Activated CD4-positive, alpha-beta T cell treated with anti-CD3 and anti-CD28 coated beads, Interleukin-2, amount 10 ng/mL, durations not matched to agents 24 days and 14 days (primary cell): ENCODE measurements at regions of chr14 and their contacts with region 1.

Region 1: DNA sequence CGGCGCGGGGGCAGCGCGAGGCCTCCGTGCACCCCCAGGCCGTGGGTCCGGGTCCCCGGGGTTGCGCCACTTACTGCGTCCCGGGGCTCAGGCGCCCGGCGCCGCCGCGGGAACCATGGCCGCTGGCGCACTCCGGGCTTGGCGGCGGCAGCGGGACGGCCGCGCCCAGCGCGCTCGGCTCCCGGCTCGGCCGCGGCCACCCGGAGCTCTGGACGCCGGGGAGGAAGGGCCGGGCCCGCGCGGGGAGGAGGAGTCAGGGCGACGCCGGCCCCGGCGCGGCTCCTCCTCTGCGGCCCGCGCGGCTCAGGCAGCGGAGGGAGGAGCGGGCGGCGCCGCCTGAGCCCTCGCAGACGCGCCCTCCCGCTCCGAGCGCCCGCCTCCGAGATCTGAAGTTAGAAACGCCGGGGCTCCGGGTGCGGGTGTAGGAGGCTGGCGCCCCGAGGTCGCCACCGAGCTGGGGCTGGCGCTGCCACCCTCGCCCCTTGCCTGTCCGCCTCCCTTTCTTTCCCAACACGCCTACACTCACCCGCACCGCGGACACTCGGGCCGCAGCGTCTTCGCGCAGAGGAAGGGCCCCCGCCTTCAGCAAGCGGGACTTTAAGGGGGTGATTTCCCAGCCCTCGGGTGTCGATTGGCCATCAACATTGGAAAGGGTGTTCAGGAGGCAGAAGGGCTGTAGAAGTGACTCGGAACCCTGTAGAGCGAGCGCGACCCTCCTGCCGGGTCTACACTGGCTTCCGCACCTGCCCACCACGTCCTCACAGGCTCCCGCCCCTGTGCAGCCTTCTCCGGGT is at the start of gene NIN:
- DNase-seq: peak; percentile 93
- H3K4me3 Mint-ChIP-seq: peak within 1 kb of the TSS; percentile 90
- H3K27ac Mint-ChIP-seq: peak within 1 kb of the TSS; percentile 93
- H3K4me1 Mint-ChIP-seq: peaks cover 45% of the 10 kb centered on the region
- H3K27me3 Mint-ChIP-seq: peaks cover 12% of the 10 kb centered on the region
- total RNA-seq, gene NIN: 40.2 and 43.1 TPM in 2 replicates

Region 2: DNA sequence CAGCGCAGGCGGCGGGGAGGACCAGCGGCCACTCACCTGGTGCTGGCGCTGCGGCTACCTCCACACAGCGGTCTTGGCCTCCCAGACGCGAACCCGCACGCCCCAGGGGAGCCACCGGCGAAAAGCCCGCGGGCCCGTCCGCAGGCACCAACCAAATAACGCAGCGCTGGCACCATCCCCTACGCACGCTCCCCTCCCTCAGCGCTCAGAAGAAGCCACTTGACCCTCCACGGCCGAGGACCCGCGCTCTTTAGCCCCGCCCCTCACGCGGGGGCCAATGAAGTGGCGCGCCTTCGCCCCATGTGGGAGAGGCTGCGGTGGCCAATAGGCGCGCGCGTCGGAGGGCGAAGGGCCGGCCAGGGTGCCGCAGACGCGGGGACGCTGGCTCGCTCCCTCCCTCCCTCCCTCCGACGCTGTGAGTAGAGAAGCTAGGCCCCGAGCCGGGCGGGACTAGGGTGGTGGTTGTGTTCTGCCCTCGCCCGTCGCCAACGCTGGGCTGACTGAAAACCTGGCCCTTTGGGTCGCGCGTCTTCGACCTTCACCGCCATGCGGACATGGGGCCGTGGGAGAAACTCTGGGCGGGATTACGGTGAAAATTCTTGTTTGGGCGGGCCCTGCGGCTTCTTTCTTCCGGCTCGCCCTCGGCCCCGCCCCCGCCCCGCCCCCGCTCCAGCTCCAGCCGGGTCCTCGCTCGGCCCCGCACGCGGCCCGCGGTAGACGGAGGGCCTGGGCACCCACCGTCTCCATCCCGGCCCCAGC is 519.0 kb before region 1 on chr14 and contains the starts of genes DMAC2L and L2HGDH:
- intact Hi-C with region 1: loop called (anchors 2 kb)
- DNase-seq: peak; percentile 98
- H3K4me3 Mint-ChIP-seq: peak within 1 kb of the TSS; percentile 96
- H3K27ac Mint-ChIP-seq: peak within 1 kb of the TSS; percentile 99
- H3K4me1 Mint-ChIP-seq: peaks cover 39% of the 10 kb centered on the region
- H3K27me3 Mint-ChIP-seq: no peaks in the 10 kb centered on the region
- total RNA-seq, gene DMAC2L: 16.3 and 18.8 TPM in 2 replicates
- total RNA-seq, gene L2HGDH: 16.8 and 18.0 TPM in 2 replicates

Region 3: DNA sequence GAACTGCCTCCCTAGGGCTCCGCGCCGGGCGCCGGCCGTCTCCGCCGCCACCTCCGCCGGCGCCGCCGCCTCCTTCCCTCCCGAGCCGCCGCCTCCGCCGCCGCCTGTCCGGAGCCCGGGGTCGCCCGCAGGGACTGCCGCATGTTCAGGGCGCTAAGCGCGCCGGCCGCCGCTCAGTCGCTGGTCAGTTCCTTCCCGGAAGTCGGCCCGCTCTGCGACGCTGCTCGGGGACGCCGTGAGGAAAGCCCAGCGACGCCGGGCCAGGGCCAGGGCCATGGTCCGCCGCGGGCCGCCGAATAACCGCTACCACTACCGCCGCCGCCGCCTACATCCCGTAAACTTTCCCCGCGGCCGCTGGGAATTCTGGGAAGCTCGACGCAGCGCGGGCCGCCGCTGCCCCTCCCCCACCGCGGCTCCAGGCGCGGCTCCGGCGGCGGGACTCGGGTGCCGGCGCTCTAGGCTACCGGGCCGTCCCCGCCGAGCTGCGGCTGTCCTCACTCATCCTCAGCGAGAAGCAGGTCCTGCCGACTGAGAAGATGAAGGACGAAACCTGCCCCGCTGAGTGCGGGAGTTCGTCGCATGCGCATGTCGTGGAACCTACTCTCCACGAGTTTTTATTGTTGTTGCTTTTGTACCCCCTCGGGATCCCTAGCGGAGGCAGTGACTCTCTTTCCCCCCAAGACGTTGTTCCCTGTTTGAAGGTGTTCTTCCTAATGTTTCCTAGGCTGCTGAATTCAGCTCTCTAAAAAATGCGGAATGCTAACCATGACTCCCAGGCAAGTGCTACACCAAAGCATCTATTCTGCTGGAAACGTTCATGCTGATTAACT is 162.9 kb before region 1 on chr14 and contains the start of gene SAV1:
- intact Hi-C with region 1: loop called (anchors 1 kb)
- DNase-seq: peak; percentile 84
- H3K4me3 Mint-ChIP-seq: no peak within 1 kb of the TSS
- H3K27ac Mint-ChIP-seq: peak within 1 kb of the TSS; percentile 50
- H3K4me1 Mint-ChIP-seq: peaks cover 13% of the 10 kb centered on the region
- H3K27me3 Mint-ChIP-seq: peaks cover 2% of the 10 kb centered on the region
- total RNA-seq, gene SAV1: 9.9 and 10.8 TPM in 2 replicates

Region 4: DNA sequence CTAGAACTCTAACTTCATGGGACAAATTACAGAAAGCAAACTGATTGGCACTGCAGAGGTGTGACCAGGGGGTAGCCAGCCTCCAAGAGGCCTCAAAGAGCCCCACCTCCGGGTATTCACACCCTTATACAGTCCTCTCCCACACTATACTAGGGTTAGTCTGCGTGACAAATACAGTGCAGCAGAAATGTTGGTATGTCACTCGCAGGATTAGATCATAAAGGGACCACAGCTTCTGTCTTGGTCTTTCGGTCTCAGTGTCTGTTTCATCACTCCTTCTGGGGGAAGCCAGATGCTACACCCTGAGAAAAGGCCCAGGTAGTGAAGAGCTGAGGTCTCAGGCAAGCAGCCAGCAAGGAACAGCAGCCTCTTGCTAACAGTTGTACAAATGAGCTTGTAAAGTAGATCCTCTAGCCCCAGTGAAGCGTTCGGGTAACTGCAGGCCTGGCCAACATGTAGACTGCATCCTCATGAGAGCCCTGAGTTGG is 94.2 kb before region 1 on chr14:
- intact Hi-C with region 1: loop called (anchors 5 kb)
- DNase-seq: peak; percentile 74
- H3K4me3 Mint-ChIP-seq: peak overlapping the region; percentile 45
- H3K27ac Mint-ChIP-seq: peak overlapping the region; percentile 73
- H3K4me1 Mint-ChIP-seq: peaks cover 34% of the 10 kb centered on the region
- H3K27me3 Mint-ChIP-seq: no peaks in the 10 kb centered on the region

Region 5: DNA sequence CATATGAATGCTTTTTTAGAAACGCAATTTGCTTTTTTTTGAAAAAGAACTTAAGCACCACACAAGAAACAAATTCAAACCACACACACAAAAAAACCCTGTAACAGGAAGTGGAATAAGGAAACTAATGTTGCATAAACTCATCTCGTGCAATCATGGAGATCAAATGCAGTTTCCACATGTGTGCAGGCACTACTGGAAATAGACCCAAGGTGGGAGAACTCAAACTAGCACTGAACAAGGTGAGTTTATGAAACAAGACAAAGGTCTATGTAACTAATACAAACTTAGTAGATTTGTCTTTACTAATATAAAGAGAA is 17.6 kb before region 1 on chr14:
- intact Hi-C with region 1: loop called (anchors 1 kb)
- DNase-seq: peak; percentile 74
- H3K4me3 Mint-ChIP-seq: peak overlapping the region; percentile 80
- H3K27ac Mint-ChIP-seq: peak overlapping the region; percentile 86
- H3K4me1 Mint-ChIP-seq: peaks cover 33% of the 10 kb centered on the region
- H3K27me3 Mint-ChIP-seq: no peaks in the 10 kb centered on the region